Left colon (tissue), 2 donors: ENCODE measurements at regions of chr17 and their contacts with region 1.

Region 1: DNA sequence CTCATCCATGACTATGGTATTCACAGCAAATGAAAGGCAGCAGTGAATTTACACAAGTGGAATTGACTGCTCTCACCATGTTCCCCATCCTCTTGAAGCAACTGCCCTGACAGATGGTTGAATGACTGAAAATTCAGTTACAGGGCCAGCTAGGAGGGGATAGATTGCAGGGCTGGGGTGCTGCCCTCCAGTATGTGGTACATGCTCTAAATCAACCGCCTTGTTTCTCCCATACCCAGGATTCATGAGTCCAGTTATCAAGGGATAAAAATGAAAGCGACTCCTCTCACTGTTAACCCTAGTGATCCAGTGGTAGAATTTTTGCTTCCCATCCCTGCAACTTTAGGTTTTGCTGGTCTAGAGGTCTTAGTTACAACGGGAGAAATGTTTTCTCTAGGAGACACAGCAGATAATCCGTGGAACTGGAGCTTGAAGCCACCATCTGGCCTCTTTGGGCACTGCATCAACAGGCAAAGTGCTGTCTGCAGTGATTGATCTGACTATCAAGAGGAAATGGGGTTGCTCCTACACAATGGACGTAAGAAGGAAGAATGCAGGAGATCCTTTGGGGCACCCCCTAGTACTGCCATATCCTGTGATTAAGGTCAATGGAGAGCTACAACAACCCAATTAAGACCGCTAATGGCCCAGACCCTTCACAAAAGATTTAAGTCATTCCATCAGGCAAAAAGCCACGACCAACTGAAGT is 32.0 kb downstream of the SCPEP1 start:
- DNase-seq: peak; percentile 50 to 75
- ATAC-seq: peak; percentile 92

Region 2: GRCh38 chr17:57068222-57068658 is 58.3 kb after region 1 on chr17:
- intact Hi-C with region 1: no loop called
- DNase-seq: peak in 1 of 2 donors; percentile 24
- ATAC-seq: peak; percentile 94

Region 3: GRCh38 chr17:57114085-57114673 is 104.3 kb after region 1 on chr17:
- intact Hi-C with region 1: loop called in 1 of 2 experiments (anchors 10 kb)
- DNase-seq: peak in 1 of 2 donors; percentile 69
- ATAC-seq: peak; percentile 29

Region 4: GRCh38 chr17:57174591-57174990 is 164.7 kb after region 1 on chr17:
- intact Hi-C with region 1: no loop called
- DNase-seq: no peak
- ATAC-seq: no peak